Endothelial cell of umbilical vein (primary cell): ENCODE measurements at regions of chr10 and their contacts with region 1.

Region 1: GRCh38 chr10:71696628-71697326 is 22.8 kb downstream of the C10orf105 start:
- DNase-seq: peak; percentile 23
- H3K4me3 ChIP-seq: no peak overlapping the region
- H3K27ac ChIP-seq: no peak overlapping the region
- H3K4me1 ChIP-seq: peaks cover 24% of the 10 kb centered on the region
- H3K27me3 ChIP-seq: peaks cover 4 to 12% of the 10 kb centered on the region in 2 experiments
- CTCF ChIP-seq: peak; percentile 81 to 93
- POLR2A ChIP-seq: no peak

Region 2: DNA sequence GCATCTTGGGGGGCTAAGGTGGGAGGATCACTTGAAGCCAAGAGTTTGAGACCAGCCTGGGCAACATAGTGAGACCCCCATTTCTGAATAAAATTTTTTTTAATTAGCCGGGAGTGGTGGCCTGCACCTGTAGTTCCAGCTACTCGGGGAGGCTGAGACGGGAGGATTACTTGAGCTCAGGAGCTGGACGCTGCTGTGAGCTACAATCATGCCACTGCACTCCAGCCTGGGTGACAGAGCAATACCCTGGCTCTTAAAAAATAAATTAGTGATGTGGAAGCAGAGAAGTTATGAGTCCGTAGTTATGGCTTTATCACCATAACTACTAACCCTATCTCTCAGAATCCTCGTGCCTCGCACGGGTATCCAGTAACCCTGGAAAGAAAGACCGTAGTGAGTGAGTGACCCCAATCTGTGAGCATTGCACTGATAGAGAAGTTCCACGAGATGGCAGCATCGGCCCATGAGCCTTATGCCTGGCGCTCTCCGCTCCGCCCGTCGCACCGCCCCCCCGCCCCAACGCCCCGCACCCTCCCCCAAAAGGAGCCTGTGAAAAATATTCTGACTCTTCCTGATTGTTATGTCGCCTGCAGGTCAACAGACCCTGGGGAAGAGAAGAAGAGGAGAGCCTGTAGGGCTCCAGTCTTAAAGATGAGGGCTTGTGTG is 382.6 kb before region 1 on chr10:
- CTCF ChIA-PET with region 1: interaction called, 90 read pairs
- POLR2A ChIA-PET with region 1: no interaction called
- dilution Hi-C with region 1: no loop called
- intact Hi-C with region 1: loop called (anchors 1 kb)
- DNase-seq: peak; percentile 28
- H3K4me3 ChIP-seq: no peak overlapping the region
- H3K27ac ChIP-seq: no peak overlapping the region
- H3K4me1 ChIP-seq: no peaks in the 10 kb centered on the region
- H3K27me3 ChIP-seq: peaks cover 16 to 20% of the 10 kb centered on the region in 2 experiments
- CTCF ChIP-seq: peak; percentile 40 to 81
- POLR2A ChIP-seq: no peak

Region 3: GRCh38 chr10:71383972-71384687 is 312.6 kb before region 1 on chr10:
- CTCF ChIA-PET with region 1: interaction called, 7 read pairs
- POLR2A ChIA-PET with region 1: no interaction called
- dilution Hi-C with region 1: no loop called
- intact Hi-C with region 1: loop called (anchors 1 kb)
- DNase-seq: peak; percentile 42
- H3K4me3 ChIP-seq: no peak overlapping the region
- H3K27ac ChIP-seq: no peak overlapping the region
- H3K4me1 ChIP-seq: no peaks in the 10 kb centered on the region
- H3K27me3 ChIP-seq: peaks cover 6 to 8% of the 10 kb centered on the region in 2 experiments
- CTCF ChIP-seq: peak; percentile 91 to 98
- POLR2A ChIP-seq: no peak

Region 4: DNA sequence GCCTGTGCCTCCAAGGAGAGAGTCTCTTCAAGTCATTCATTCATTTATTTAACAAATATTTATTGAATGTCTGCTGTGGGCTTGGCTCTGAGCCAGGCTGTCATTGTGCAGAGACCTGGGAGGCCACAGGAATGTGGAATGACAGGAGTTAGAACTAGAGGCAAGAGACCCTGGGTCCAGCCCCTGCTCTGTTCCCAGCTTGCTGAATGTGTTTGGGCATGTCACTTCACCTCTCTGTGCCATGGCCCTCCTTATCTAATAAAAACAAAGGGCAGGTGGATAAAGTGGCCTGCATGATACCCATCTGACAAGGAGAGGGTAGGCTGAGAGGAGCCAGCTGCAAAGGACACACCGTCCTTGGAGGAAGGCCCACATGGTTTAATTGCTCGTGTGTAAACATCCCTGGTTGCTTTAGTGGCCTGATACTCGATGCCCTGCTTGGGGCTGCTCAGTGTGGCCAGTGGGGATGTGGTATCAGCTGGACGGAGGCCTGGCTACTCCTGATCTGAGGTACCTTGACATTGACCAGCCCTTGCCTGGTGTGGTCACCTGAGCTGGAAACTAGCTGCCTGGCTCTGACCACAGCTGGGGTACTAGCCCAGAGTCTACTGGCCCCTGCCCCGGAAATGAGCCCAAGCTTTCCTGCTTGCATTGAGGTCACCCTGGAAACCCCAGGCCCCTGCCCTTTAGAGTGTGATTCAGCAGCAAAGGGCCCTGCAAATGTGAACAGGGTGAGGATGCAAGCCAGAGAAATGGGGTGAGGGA is 183.8 kb before region 1 on chr10:
- CTCF ChIA-PET with region 1: no interaction called
- POLR2A ChIA-PET with region 1: no interaction called
- dilution Hi-C with region 1: no loop called
- intact Hi-C with region 1: no loop called
- DNase-seq: no peak
- H3K4me3 ChIP-seq: no peak overlapping the region
- H3K27ac ChIP-seq: no peak overlapping the region
- H3K4me1 ChIP-seq: no peaks in the 10 kb centered on the region
- H3K27me3 ChIP-seq: peaks cover 2% of the 10 kb centered on the region in 2 experiments
- CTCF ChIP-seq: no peak
- POLR2A ChIP-seq: no peak

Region 5: GRCh38 chr10:71663311-71663710 is 33.5 kb before region 1 on chr10:
- CTCF ChIA-PET with region 1: interaction called, 10 read pairs
- POLR2A ChIA-PET with region 1: no interaction called
- dilution Hi-C with region 1: no loop called
- intact Hi-C with region 1: no loop called
- DNase-seq: no peak
- H3K4me3 ChIP-seq: no peak overlapping the region
- H3K27ac ChIP-seq: no peak overlapping the region
- H3K4me1 ChIP-seq: no peaks in the 10 kb centered on the region
- H3K27me3 ChIP-seq: peaks cover 0 to 2% of the 10 kb centered on the region in 2 experiments
- CTCF ChIP-seq: no peak
- POLR2A ChIP-seq: no peak

Region 6: DNA sequence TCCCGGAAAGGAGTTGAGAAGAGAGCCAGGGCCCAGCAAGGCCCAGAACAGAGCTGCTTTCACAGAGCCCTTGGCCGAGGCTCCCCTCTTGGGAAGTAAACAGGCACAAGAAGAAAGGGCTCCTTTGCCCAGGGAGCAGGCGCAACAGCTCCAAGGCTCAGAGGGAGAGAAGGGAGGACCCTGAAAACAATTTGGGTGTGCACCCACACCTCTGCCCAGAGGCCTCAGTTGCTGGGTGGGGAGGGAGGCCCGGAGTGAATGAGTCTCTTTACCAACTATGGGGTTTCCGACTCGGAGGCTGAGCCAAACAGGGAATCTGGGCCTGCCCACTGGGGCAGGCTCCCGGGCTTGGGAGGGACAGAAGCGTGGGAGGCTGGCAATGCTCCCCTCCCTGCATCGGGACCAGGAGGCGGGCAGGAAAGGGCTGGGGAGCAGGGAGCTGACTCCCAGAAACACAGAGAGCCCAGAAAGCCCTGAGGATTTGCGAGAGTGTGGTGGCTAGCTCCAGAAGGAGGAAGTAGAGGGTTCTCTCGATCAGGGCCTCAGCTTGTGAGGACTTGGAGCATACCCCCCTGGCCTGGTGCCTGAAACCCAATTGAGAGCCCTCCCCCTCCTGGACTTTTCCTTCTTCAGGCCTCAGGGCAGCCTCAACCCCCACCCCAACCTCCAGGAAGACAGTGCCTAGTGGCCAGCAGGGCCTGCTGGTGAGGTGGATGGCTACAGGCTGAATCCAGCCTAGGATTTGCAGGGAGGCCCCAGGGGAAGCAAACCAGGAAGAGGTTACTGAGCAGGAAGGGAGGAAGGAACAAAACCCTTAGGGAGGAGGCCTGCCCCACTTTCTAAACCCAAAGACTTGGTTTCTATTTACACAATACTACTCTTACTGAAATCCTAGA is 16.6 kb after region 1 on chr10:
- CTCF ChIA-PET with region 1: interaction called, 63 read pairs
- POLR2A ChIA-PET with region 1: interaction called, 3 read pairs
- dilution Hi-C with region 1: no loop called
- intact Hi-C with region 1: no loop called
- DNase-seq: peak; percentile 26
- H3K4me3 ChIP-seq: no peak overlapping the region
- H3K27ac ChIP-seq: no peak overlapping the region
- H3K4me1 ChIP-seq: peaks cover 3% of the 10 kb centered on the region
- H3K27me3 ChIP-seq: peaks cover 0 to 2% of the 10 kb centered on the region in 2 experiments
- CTCF ChIP-seq: peak in 1 of 2 donors; percentile 10
- POLR2A ChIP-seq: no peak

Region 7: DNA sequence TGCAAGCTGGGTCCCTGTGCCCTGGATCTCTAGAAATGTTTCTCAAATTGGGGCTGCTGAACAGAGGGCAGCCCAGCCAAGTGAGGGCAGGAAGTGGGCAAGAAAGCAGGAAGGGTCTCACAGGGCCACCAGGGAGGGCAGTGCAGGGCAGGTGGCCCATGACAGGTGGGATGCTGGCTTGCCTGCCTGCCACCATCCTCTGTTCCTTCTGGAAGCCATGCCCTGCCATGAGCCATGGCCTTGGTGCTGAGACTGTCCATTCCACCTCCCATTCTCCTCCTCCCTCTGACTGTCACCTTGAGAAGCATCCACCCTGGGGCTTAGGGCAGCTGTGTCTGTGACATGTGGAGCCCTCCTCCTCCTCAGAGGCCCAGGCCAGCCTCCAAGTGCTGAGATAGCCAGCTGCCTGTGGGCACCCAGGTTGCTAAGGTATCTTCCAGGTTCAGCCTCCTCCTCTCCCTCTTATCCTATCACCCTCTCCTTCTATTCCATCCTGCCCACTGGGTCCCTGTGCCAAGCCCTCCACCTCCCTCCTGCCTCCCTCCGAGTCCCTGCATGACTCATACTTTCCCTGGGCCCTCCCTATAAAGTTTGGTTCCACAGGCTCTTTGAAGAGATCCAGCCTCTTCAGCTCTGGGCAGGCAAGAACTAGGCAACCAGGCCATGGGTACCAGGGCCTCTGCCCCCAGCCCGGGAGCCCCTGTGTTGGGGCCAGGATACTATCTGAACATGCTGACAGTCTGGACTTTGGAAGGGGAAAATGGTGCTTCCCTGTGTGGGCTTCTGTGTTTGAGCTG is 75.2 kb after region 1 on chr10:
- CTCF ChIA-PET with region 1: interaction called, 16 read pairs
- POLR2A ChIA-PET with region 1: no interaction called
- dilution Hi-C with region 1: no loop called
- intact Hi-C with region 1: loop called (anchors 2 kb)
- DNase-seq: peak; percentile 32
- H3K4me3 ChIP-seq: no peak overlapping the region
- H3K27ac ChIP-seq: no peak overlapping the region
- H3K4me1 ChIP-seq: peaks cover 36% of the 10 kb centered on the region
- H3K27me3 ChIP-seq: no peaks in the 10 kb centered on the region
- CTCF ChIP-seq: no peak
- POLR2A ChIP-seq: no peak

Region 8: DNA sequence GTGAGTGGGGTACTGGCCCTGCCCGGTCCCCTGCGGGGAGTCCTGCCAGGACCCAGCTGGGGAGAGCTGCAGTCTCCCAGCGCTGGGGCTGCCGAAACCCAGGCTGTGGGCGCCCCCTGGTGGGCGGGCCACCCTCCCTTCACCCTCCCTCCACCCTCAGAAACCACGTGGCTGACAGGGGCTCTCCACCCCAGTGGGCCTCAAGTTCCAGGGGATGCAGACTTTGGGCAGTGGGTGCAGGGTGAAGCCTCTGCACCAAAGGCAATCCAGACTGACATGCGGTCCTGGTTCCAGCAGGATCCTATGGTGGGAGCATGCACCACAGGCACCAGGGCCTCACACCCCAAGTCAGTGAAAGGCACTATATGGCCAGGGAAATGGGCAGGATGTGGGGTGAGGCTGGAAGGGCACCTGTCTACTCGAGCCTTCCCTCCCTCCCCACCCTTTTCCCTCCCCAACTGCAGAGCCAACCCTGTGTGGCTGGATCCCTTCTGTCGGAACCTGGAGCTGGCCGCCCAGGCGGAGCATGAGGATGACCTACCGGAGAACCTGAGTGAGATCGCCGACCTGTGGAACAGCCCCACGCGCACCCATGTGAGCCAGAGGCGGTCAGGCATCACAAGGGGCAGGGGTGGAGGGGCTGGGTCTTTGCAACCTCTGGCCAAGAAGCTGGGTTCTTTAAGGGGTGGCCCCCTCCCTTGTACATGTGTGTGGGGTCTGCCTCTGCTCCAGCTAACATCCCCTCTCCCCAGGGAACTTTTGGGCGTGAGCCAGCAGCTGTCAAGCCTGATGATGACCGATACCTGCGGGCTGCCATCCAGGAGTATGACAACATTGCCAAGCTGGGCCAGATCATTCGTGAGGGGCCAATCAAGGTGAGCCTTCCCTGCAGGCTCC is 115.5 kb after region 1 on chr10:
- CTCF ChIA-PET with region 1: interaction called, 11 read pairs
- POLR2A ChIA-PET with region 1: no interaction called
- dilution Hi-C with region 1: no loop called
- intact Hi-C with region 1: no loop called
- DNase-seq: peak; percentile 46
- H3K4me3 ChIP-seq: no peak overlapping the region
- H3K27ac ChIP-seq: no peak overlapping the region
- H3K4me1 ChIP-seq: no peaks in the 10 kb centered on the region
- H3K27me3 ChIP-seq: no peaks in the 10 kb centered on the region
- CTCF ChIP-seq: peak; percentile 89 to 92
- POLR2A ChIP-seq: no peak